HCT116 (cell line): ENCODE measurements at regions of chr2 and their contacts with region 1.

Region 1: DNA sequence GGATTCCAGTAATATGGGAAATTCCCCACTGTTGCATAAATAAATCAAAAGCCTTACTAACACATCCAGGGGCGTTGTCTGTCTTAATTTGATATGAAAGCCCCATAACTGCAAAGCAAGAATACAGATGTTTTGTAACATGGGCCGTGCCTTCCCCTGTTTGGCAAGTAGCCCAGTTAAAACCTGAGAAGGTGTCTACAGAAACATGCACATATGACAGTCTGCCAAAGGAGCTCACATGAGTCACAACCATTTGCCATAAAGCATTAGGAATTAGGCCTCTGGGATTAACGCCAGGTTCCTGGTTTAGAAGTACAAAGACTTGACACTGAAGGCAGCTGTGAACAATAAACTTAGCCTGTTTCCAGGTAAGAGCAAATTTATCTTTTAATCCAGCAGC is 43.1 kb upstream of the LONRF2 start:
- DNase-seq: peak; percentile 86
- ATAC-seq: no peak
- H3K4me3 ChIP-seq: no peak overlapping the region
- H3K27ac ChIP-seq: 0 out of 2 replicates have a peak overlapping the region, but pooled peaks have one; percentile 13
- H3K4me1 ChIP-seq: peaks cover 0 to 11% of the 10 kb centered on the region in 2 experiments; a peak in 3 of 4 replicates
- H3K27me3 ChIP-seq: no peaks in the 10 kb centered on the region
- CTCF ChIP-seq: no peak
- POLR2A ChIP-seq: no peak
- RAD21 ChIP-seq: no peak

Region 2: GRCh38 chr2:99933913-99934650 is 431.4 kb before region 1 on chr2:
- CTCF ChIA-PET with region 1: no interaction called
- POLR2A ChIA-PET with region 1: no interaction called
- RAD21 ChIA-PET with region 1: no interaction called
- intact Hi-C with region 1: no loop called
- DNase-seq: no peak
- ATAC-seq: no peak
- H3K4me3 ChIP-seq: no peak overlapping the region
- H3K27ac ChIP-seq: no peak overlapping the region
- H3K4me1 ChIP-seq: no peaks in the 10 kb centered on the region
- H3K27me3 ChIP-seq: peaks cover 53% of the 10 kb centered on the region
- CTCF ChIP-seq: no peak
- POLR2A ChIP-seq: no peak
- RAD21 ChIP-seq: no peak

Region 3: DNA sequence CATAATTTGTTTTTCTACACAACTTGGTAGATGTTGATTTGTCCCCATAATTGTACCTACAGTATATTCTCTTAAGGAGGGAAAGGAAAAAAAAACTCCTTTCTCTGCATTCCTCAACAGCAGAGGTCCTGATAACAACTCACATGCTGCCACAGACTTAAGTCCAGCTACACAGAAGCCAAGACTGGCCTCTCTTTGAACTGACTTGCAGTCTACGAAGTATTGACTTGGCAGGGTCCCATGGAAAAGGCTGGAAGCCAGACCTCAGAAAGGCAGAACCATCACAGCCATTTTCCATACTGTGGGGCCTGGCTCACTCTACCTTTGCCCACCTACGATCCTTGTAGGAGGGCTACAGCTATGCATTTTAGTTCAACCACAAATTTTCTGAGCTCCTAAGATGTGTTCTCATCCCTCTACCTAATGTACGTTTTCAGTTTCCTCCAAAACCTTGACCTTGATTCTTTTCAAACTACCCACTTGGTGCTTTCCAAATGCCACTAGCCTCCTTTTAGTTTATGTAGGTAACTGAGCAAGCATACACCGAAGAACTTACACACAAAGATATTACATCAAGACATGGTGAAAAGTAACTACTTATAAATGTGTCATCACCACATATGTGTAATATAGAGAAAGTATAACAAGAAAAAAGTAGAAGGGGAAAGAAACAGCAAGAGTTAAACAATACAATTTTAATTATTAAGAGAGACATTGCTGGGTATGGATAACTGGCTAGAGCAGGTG is 55.3 kb before region 1 on chr2:
- CTCF ChIA-PET with region 1: no interaction called
- POLR2A ChIA-PET with region 1: no interaction called
- RAD21 ChIA-PET with region 1: no interaction called
- intact Hi-C with region 1: loop called (anchors 5 kb)
- DNase-seq: no peak
- ATAC-seq: no peak
- H3K4me3 ChIP-seq: no peak overlapping the region
- H3K27ac ChIP-seq: no peak overlapping the region
- H3K4me1 ChIP-seq: no peaks in the 10 kb centered on the region
- H3K27me3 ChIP-seq: no peaks in the 10 kb centered on the region
- CTCF ChIP-seq: no peak
- POLR2A ChIP-seq: no peak
- RAD21 ChIP-seq: no peak

Region 4: GRCh38 chr2:100381240-100381639 is 15.8 kb after region 1 on chr2:
- CTCF ChIA-PET with region 1: interaction called, 24 read pairs
- POLR2A ChIA-PET with region 1: no interaction called
- RAD21 ChIA-PET with region 1: no interaction called
- intact Hi-C with region 1: no loop called
- DNase-seq: peak; percentile 71
- ATAC-seq: peak; percentile 89
- H3K4me3 ChIP-seq: no peak overlapping the region
- H3K27ac ChIP-seq: no peak overlapping the region
- H3K4me1 ChIP-seq: peaks cover 0 to 7% of the 10 kb centered on the region in 2 experiments; a peak in 2 of 4 replicates
- H3K27me3 ChIP-seq: no peaks in the 10 kb centered on the region
- CTCF ChIP-seq: peak; percentile 86 to 93 (median 87); a peak in 5 of 6 replicates
- POLR2A ChIP-seq: no peak
- RAD21 ChIP-seq: peak; percentile 95